ENCODE measurements at regions of chr20 and their contacts with region 1.

Region 1: DNA sequence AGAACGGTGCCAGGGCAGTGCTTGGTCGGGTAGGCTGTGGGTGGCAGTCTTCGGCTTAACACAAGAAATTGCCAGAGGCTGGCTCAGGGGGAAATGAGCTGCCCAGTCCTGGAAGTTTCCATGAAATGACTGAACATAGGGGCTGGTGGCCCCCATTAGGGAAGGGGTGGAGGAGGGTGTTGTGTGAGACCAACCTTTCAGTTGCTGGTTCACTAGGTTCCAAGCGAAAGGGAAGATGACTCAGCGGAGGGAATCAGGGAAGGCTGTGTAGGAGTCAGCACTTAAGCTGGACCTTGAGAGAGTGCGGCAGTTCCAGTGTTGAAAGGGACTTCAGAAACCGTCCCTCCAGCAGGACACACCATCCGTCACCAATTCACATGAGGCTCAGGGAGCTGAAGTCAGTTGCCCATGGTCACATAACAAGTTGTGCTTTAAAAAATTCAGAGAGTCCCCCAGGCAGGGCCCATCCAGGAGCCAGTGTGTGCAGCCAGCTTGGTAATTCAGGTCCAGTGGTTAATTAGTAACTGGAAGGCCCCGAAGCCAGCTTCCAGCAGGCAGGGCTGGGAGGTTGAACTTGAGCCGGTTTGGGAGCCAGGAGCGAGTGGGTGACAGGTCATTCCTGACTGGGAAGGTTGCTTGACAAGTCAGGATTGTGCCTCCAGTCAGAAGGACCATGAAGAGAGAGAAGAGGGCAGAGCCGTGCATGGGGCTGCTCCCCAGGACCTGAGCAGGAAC is at the start of gene SGK2:
- DNase-seq: no peak
- ATAC-seq: no peak
- H3K4me3 ChIP-seq: no peak within 1 kb of the TSS
- H3K4me3 Mint-ChIP-seq: no peak within 1 kb of the TSS
- H3K27ac ChIP-seq: no peak within 1 kb of the TSS
- H3K27ac Mint-ChIP-seq: no peak within 1 kb of the TSS
- H3K4me1 ChIP-seq: no peaks in the 10 kb centered on the region
- H3K4me1 Mint-ChIP-seq: no peaks in the 10 kb centered on the region
- H3K27me3 ChIP-seq: peaks cover 0 to 10% of the 10 kb centered on the region in 2 experiments
- H3K27me3 Mint-ChIP-seq: peaks cover 0 to 1% of the 10 kb centered on the region in 2 donors
- total RNA-seq, gene SGK2: 0.73 to 2.0 (median 1.4) TPM

Region 2: DNA sequence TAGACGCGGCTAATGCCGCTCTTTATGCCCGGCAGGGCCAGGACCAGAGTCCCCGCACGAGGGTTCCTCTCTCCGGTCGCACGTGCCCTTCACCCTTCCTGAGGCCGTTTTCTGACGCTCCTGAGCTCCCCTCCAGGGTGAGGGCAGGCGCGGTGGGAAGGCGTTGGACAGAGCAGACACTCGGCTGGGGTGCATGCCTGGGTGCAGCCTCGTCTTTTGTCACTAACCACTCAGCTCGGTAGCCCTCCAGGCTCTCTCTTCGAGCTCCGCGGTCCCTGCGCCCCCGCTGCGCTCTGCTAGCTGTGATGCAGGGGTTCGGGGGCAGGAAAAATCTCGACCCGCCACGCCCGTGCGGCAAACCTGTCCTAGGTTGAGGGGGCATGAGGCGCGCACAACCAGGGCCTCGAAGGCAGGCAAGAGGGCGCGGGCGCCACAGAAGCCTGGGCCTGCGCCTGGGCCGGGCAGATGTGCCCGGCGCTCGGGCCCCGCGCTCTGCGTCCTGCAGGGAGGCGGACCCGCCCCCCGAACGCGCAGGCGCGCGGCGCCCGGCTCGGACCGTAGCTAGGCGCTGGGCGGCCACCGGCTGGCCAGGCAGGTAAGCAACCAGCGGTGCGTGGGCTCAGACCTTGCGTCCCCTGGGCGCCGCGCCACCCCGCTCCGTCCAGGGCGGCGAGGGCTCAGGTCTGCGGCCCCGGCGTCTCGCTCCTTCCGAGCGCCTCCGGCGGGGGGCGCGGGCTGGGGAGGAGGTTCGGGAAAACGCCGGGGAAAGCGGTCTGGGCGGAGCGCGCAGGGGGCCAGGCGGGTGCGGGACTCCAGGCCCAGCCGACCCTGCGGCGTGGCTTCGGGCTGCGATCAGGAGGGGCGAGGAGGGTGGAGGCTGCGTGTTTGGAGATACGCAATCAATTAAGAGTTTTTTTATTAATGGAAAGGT is 51.2 kb before region 1 on chr20 and contains the start of gene L3MBTL1:
- CTCF ChIA-PET with region 1: no interaction called
- POLR2A ChIA-PET with region 1: no interaction called
- DNase-seq: peak in 3 of 35 experiments; percentile 1 to 10 (median 9)
- ATAC-seq: peak in 3 of 4 experiments; percentile 30 to 52 (median 43)
- H3K4me3 ChIP-seq: peak within 1 kb of the TSS; percentile 34 to 78
- H3K4me3 Mint-ChIP-seq: peak within 1 kb of the TSS; percentile 54 to 63 (median 61)
- H3K27ac ChIP-seq: no peak within 1 kb of the TSS
- H3K27ac Mint-ChIP-seq: no peak within 1 kb of the TSS
- H3K4me1 ChIP-seq: peaks cover 0 to 13% of the 10 kb centered on the region in 2 experiments
- H3K4me1 Mint-ChIP-seq: peaks cover 4 to 7% (median 6%) of the 10 kb centered on the region in 3 donors
- H3K27me3 ChIP-seq: peaks cover 11 to 39% of the 10 kb centered on the region in 2 experiments
- H3K27me3 Mint-ChIP-seq: peaks cover 23 to 32% of the 10 kb centered on the region in 2 donors
- total RNA-seq, gene L3MBTL1: 15.5 to 20.1 (median 16.1) TPM

Region 3: GRCh38 chr20:43590392-43591323 is 32.1 kb after region 1 on chr20 and contains the start of gene IFT52:
- CTCF ChIA-PET with region 1: no interaction called
- POLR2A ChIA-PET with region 1: interaction called in 1 of 2 experiments, 10 read pairs
- DNase-seq: peak; percentile 72 to 95 (median 86)
- ATAC-seq: peak; percentile 97 to 98 (median 98)
- H3K4me3 ChIP-seq: peak within 1 kb of the TSS; percentile 81 to 82
- H3K4me3 Mint-ChIP-seq: peak within 1 kb of the TSS; percentile 87 to 94 (median 92)
- H3K27ac ChIP-seq: peak within 1 kb of the TSS; percentile 85
- H3K27ac Mint-ChIP-seq: peak within 1 kb of the TSS; percentile 96 to 97
- H3K4me1 ChIP-seq: peaks cover 5 to 16% of the 10 kb centered on the region in 2 experiments
- H3K4me1 Mint-ChIP-seq: peaks cover 16 to 30% (median 18%) of the 10 kb centered on the region in 3 donors
- H3K27me3 ChIP-seq: peaks cover 0 to 5% of the 10 kb centered on the region in 2 experiments
- H3K27me3 Mint-ChIP-seq: peaks cover 6 to 7% of the 10 kb centered on the region in 2 donors
- total RNA-seq, gene IFT52: 11.4 to 16.0 (median 13.9) TPM